Adrenal gland (tissue), 19 donors: ENCODE measurements at regions of chr5 and their contacts with region 1.

Region 1: DNA sequence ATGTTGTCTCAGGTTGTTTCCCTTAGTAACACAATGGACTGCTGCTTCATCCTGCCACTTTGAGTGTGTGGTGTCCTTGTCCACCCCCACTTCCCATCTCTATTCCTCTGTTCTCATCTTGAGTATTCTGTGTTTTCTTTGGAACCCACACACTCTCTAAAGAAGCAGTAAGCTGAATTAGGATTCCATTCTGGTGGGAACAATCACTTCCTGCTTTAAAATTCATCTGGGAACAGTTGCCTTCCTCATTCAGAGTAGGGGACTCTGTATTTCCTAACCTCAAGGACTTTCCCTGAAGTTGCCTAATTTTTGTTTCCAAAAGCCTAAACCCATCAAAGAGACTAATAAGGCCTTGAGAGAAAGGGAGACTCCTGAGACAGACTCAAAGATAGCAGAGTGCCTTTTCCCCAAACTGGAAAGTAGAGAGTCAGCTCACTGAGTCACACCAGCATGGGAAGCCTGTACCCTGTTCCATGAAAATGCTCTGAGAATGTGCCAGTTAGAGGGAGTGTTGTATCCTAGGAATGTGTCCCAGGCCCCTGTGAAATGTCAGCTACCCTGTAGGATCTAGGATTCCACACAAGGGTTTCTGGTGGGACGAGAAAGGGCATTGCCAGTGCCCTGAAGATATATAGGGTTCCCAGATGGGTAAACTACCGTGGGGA is 63.6 kb downstream of the CCDC192 start:
- DNase-seq: no peak
- H3K4me3 ChIP-seq: no peak overlapping the region
- H3K27ac ChIP-seq: peak overlapping the region in 1 of 5 donors; percentile 53
- H3K4me1 ChIP-seq: peaks cover 15 to 19% of the 10 kb centered on the region in 2 donors
- H3K27me3 ChIP-seq: no peaks in the 10 kb centered on the region
- CTCF ChIP-seq: no peak
- POLR2A ChIP-seq: no peak

Region 2: GRCh38 chr5:127718181-127718580 is 48.6 kb before region 1 on chr5:
- intact Hi-C with region 1: no loop called
- DNase-seq: no peak
- H3K4me3 ChIP-seq: no peak overlapping the region
- H3K27ac ChIP-seq: no peak overlapping the region
- H3K4me1 ChIP-seq: peaks cover 0 to 2% of the 10 kb centered on the region in 2 donors
- H3K27me3 ChIP-seq: no peaks in the 10 kb centered on the region
- CTCF ChIP-seq: no peak
- POLR2A ChIP-seq: no peak

Region 3: GRCh38 chr5:127820910-127821553 is 54.2 kb after region 1 on chr5:
- intact Hi-C with region 1: loop called in 1 of 2 experiments (anchors 5 kb)
- DNase-seq: no peak
- H3K4me3 ChIP-seq: no peak overlapping the region
- H3K27ac ChIP-seq: no peak overlapping the region
- H3K4me1 ChIP-seq: peaks cover 0 to 10% of the 10 kb centered on the region in 2 donors
- H3K27me3 ChIP-seq: no peaks in the 10 kb centered on the region
- CTCF ChIP-seq: no peak
- POLR2A ChIP-seq: no peak

Region 4: GRCh38 chr5:127867389-127867788 is 100.6 kb after region 1 on chr5:
- intact Hi-C with region 1: loop called in 1 of 2 experiments (anchors 10 kb)
- DNase-seq: peak in 1 of 7 donors; percentile 10
- H3K4me3 ChIP-seq: no peak overlapping the region
- H3K27ac ChIP-seq: peak overlapping the region in 3 of 5 donors; percentile 48 to 57 (median 54)
- H3K4me1 ChIP-seq: peaks cover 49 to 66% of the 10 kb centered on the region in 2 donors
- H3K27me3 ChIP-seq: no peaks in the 10 kb centered on the region
- CTCF ChIP-seq: no peak
- POLR2A ChIP-seq: no peak